HepG2 (cell line): ENCODE measurements at regions of chr11 and their contacts with region 1.

Region 1: GRCh38 chr11:78139422-78140391 is at the start of gene ALG8:
- DNase-seq: peak; percentile 93
- ATAC-seq: peak; percentile 98
- H3K4me3 ChIP-seq: peak within 1 kb of the TSS; percentile 72 to 84 (median 75)
- H3K27ac ChIP-seq: peak within 1 kb of the TSS; percentile 81
- H3K4me1 ChIP-seq: peaks cover 54% of the 10 kb centered on the region
- H3K27me3 ChIP-seq: no peaks in the 10 kb centered on the region; a peak in 1 of 5 replicates
- CTCF ChIP-seq: no peak
- EP300 ChIP-seq: 0 out of 4 replicates have a peak, but pooled peaks of 1 of the 2 experiments have one; percentile 14
- POLR2A ChIP-seq: peak; percentile 83 to 90
- RAD21 ChIP-seq: no peak; the same call in none of the 2 replicates
- total RNA-seq, gene ALG8: 50.0 and 88.0 TPM in 2 replicates

Region 2: DNA sequence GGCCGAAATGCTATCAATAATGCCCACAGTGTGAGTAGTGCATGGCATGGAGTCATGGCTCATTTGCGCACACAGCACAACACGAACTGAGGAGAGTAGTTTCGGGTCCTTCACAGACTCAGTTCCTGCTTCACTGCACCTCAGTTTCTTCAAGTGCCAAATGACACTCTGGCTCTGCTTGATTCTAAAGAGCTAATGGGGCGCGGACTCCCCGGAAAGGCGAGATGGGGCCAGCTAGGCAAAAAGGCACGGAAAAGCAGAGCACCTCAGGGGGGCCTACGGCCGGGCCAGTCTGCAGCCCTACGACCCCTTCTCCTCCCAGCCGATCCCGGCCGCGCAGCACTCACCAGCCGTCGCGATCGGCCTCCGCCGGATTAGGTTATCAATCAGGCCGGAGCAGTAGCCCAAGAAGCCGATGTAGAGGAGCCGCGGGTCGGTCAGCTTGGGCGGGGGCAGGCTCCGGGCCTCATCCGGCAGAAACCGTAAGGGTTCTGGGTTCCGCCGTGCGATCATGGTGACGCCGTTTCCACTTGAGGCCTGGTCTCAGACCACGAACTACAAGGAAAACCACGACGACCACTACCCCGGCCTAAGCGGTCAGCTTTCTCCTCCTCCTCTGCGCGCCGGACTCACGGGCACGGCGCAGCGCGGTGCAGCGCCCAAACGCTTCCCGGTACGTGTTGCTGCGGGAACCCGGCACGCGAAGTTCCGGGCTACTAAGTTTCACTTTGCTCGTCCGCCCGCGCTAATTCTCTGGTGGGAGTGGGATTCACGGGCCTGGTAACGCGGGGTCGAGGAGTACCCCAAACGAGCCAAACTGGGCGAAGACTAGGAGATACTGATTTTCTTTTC is 60.2 kb before region 1 on chr11 and contains the start of gene NDUFC2:
- CTCF ChIA-PET with region 1: no interaction called
- POLR2A ChIA-PET with region 1: interaction called, 20 read pairs
- in situ Hi-C with region 1: no loop called
- intact Hi-C with region 1: loop called (anchors 2 kb)
- DNase-seq: peak; percentile 58
- ATAC-seq: peak; percentile 90
- H3K4me3 ChIP-seq: peak within 1 kb of the TSS; percentile 86 to 96 (median 88)
- H3K27ac ChIP-seq: peak within 1 kb of the TSS; percentile 87
- H3K4me1 ChIP-seq: peaks cover 55% of the 10 kb centered on the region
- H3K27me3 ChIP-seq: no peaks in the 10 kb centered on the region; a peak in 1 of 5 replicates
- CTCF ChIP-seq: no peak
- EP300 ChIP-seq: peak; percentile 46 to 55; a peak in 3 of 4 replicates
- POLR2A ChIP-seq: peak; percentile 83 to 90
- RAD21 ChIP-seq: peak; percentile 66
- total RNA-seq, gene NDUFC2: 312 and 363 TPM in 2 replicates

Region 3: GRCh38 chr11:78094250-78094649 is 45.5 kb before region 1 on chr11:
- CTCF ChIA-PET with region 1: no interaction called
- POLR2A ChIA-PET with region 1: interaction called, 21 read pairs
- in situ Hi-C with region 1: no loop called
- intact Hi-C with region 1: no loop called
- DNase-seq: no peak
- ATAC-seq: no peak
- H3K4me3 ChIP-seq: no peak overlapping the region
- H3K27ac ChIP-seq: no peak overlapping the region
- H3K4me1 ChIP-seq: peaks cover 49% of the 10 kb centered on the region
- H3K27me3 ChIP-seq: no peaks in the 10 kb centered on the region
- CTCF ChIP-seq: no peak
- EP300 ChIP-seq: no peak
- POLR2A ChIP-seq: no peak
- RAD21 ChIP-seq: no peak

Region 4: DNA sequence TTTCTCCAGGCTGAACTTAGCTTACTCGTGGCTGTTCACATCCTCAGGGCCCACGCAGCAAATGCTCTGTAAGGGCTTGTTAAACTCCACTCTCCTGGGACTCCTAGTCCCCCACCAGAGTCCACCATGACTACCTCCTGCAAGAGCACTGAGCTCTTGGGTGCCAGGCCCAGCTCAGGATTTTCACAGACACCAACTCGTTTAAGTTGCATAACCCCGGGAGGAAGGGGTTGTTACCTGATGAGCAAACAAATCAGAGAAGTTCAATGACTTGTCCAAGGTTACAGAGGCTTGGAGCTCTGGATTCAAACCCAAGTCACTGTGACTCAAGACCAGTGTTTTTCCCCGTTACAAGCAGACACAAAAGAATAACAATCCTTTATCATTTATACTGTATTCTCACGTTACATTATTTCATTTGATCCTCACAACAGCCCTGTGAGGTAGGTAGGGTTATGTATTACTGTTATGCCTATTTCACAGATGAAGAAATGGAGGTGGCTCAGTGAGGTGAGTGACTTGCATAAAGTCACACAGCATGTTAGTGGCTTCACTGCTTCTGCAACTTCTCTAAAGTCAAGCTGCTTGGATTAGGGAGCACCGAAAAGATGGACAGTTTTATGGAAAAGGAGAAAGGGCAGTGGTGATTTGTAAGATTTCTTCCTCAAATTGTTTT is 31.3 kb after region 1 on chr11:
- CTCF ChIA-PET with region 1: no interaction called
- POLR2A ChIA-PET with region 1: interaction called, 15 read pairs
- in situ Hi-C with region 1: no loop called
- intact Hi-C with region 1: no loop called
- DNase-seq: peak; percentile 71
- ATAC-seq: peak; percentile 61
- H3K4me3 ChIP-seq: no peak overlapping the region
- H3K27ac ChIP-seq: no peak overlapping the region
- H3K4me1 ChIP-seq: peaks cover 38% of the 10 kb centered on the region
- H3K27me3 ChIP-seq: no peaks in the 10 kb centered on the region
- CTCF ChIP-seq: no peak
- EP300 ChIP-seq: peak in 1 of 2 experiments; percentile 67; a peak in 2 of 4 replicates
- POLR2A ChIP-seq: no peak
- RAD21 ChIP-seq: no peak